Activated CD4-positive, alpha-beta memory T cell treated with anti-CD3 and anti-CD28 coated beads for 36 hours (primary cell): ENCODE measurements at regions of chr1 and their contacts with region 1.

Region 1: DNA sequence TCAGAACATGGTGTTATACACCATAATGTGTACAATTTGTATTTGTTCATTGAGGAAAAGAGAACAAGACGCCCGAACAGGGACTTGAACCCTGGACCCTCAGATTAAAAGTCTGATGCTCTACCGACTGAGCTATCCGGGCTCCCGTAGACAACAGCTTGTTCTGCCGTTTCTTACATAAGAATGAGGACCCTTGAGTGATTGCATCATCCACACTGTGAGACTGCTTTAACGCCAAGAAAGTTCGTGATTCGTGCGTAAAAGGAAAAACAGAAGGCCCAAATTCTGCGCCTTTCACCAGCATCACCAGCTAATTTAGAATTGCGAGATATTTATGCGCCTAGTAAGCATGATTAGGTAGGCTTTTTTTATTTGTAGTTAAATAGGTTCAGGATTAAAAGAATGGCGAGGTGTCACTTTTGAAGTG is 9.2 kb upstream of the MDM4 start:
- DNase-seq: peak; percentile 93
- H3K4me3 Mint-ChIP-seq: peak overlapping the region; percentile 91
- H3K27ac Mint-ChIP-seq: peak overlapping the region; percentile 98
- H3K4me1 Mint-ChIP-seq: peaks cover 24% of the 10 kb centered on the region
- H3K27me3 Mint-ChIP-seq: peaks cover 4% of the 10 kb centered on the region

Region 2: GRCh38 chr1:203326830-203327683 is 1179.9 kb before region 1 on chr1:
- CTCF ChIA-PET with region 1: no interaction called
- POLR2A ChIA-PET with region 1: no interaction called
- intact Hi-C with region 1: loop called (anchors 10 kb)
- DNase-seq: peak; percentile 96
- H3K4me3 Mint-ChIP-seq: peak overlapping the region; percentile 75
- H3K27ac Mint-ChIP-seq: peak overlapping the region; percentile 94
- H3K4me1 Mint-ChIP-seq: peaks cover 55% of the 10 kb centered on the region
- H3K27me3 Mint-ChIP-seq: no peaks in the 10 kb centered on the region

Region 3: GRCh38 chr1:204213668-204214662 is 293.0 kb before region 1 on chr1 and contains the start of gene GOLT1A:
- CTCF ChIA-PET with region 1: no interaction called
- POLR2A ChIA-PET with region 1: no interaction called
- intact Hi-C with region 1: loop called (anchors 5 kb)
- DNase-seq: peak; percentile 68
- H3K4me3 Mint-ChIP-seq: peak within 1 kb of the TSS; percentile 40
- H3K27ac Mint-ChIP-seq: no peak within 1 kb of the TSS
- H3K4me1 Mint-ChIP-seq: peaks cover 3% of the 10 kb centered on the region
- H3K27me3 Mint-ChIP-seq: peaks cover 4% of the 10 kb centered on the region
- total RNA-seq, gene GOLT1A: 0.27 TPM in 1 of 2 experiments, not detected in the other

Region 4: DNA sequence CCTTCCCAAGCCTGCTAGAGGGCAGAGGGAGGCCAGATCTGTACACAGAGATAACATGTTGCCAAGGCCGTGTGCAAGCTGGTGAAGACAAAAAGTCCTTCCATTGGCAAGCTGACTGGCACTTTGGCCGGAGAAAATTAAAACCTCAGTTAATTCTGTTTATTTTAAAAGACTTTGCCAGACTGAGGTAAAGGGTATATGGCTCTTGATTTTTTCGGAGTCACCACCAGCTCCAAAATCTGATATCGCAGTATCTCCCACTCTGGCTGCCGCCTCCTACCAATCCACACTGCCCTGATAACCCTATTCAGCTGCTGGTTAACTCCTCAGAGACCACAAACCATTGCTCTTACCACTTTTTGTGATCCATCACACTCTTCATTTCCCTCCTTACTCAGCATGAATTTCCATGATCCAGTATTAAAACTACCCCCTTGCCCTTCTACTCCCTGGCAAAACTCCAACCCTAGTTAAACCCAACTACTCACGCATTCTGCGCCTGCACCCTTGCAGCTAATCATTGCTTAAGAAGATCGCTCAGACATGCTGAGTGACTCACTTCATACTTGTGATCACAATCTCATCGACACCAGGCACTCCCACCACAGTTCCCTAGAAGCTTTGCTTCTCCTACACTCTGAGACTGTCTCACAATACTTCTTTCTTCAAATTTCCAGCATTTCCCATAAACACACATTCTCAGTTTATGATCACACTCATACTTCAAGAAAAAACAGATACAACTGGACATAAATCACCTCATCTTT is 89.6 kb before region 1 on chr1:
- CTCF ChIA-PET with region 1: interaction called, 10 read pairs
- POLR2A ChIA-PET with region 1: no interaction called
- intact Hi-C with region 1: no loop called
- DNase-seq: peak; percentile 58
- H3K4me3 Mint-ChIP-seq: no peak overlapping the region
- H3K27ac Mint-ChIP-seq: peak overlapping the region; percentile 31
- H3K4me1 Mint-ChIP-seq: peaks cover 33% of the 10 kb centered on the region
- H3K27me3 Mint-ChIP-seq: no peaks in the 10 kb centered on the region

Region 5: GRCh38 chr1:204446370-204447111 is 60.4 kb before region 1 on chr1:
- CTCF ChIA-PET with region 1: interaction called, 1,224 read pairs
- POLR2A ChIA-PET with region 1: interaction called, 12 read pairs
- intact Hi-C with region 1: loop called (anchors 1 kb)
- DNase-seq: peak; percentile 86
- H3K4me3 Mint-ChIP-seq: no peak overlapping the region
- H3K27ac Mint-ChIP-seq: peak overlapping the region; percentile 76
- H3K4me1 Mint-ChIP-seq: peaks cover 77% of the 10 kb centered on the region
- H3K27me3 Mint-ChIP-seq: no peaks in the 10 kb centered on the region

Region 6: GRCh38 chr1:204523605-204524215 is 16.7 kb after region 1 on chr1:
- CTCF ChIA-PET with region 1: interaction called, 11 read pairs
- POLR2A ChIA-PET with region 1: interaction called, 68 read pairs
- intact Hi-C with region 1: loop called (anchors 2 kb)
- DNase-seq: peak; percentile 36
- H3K4me3 Mint-ChIP-seq: no peak overlapping the region
- H3K27ac Mint-ChIP-seq: peak overlapping the region; percentile 68
- H3K4me1 Mint-ChIP-seq: peaks cover 45% of the 10 kb centered on the region
- H3K27me3 Mint-ChIP-seq: no peaks in the 10 kb centered on the region